Activated naive CD4-positive, alpha-beta T cell treated with anti-CD3 and anti-CD28 coated beads, Interleukin-2, amount 10 ng/mL, durations not matched to agents 7 days and 5 days (primary cell): ENCODE measurements at regions of chr6 and their contacts with region 1.

Region 1: GRCh38 chr6:41039060-41039998 is at the start of gene UNC5CL:
- DNase-seq: peak; percentile 81
- H3K4me3 Mint-ChIP-seq: no peak within 1 kb of the TSS
- H3K27ac Mint-ChIP-seq: no peak within 1 kb of the TSS
- H3K4me1 Mint-ChIP-seq: peaks cover 13% of the 10 kb centered on the region
- H3K27me3 Mint-ChIP-seq: peaks cover 4% of the 10 kb centered on the region

Region 2: DNA sequence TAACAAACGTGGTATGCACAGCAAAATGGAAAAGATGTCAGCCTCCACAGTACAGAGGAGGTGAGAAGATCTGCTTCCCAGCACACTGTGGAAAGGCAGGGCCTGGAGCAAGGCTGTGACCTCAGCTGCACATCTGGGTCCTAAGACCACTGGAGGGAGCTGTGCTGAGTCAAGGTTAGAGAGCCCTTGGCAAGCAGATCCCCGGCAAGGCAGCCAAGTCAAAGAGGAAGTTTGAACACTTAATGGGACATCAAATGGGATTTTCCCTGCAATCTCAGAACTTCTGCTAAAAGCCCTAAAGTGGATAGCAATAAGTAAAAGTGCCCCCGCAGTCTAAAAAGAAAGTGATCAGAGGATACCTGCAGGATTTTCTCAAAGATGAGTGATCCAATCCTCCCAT is 39.8 kb before region 1 on chr6:
- CTCF ChIA-PET with region 1: interaction called, 10 read pairs
- DNase-seq: peak; percentile 39
- H3K4me3 Mint-ChIP-seq: no peak overlapping the region
- H3K27ac Mint-ChIP-seq: no peak overlapping the region
- H3K4me1 Mint-ChIP-seq: no peaks in the 10 kb centered on the region
- H3K27me3 Mint-ChIP-seq: peaks cover 70% of the 10 kb centered on the region

Region 3: GRCh38 chr6:41051873-41052272 is 12.5 kb after region 1 on chr6:
- CTCF ChIA-PET with region 1: interaction called, 38 read pairs
- DNase-seq: no peak
- H3K4me3 Mint-ChIP-seq: no peak overlapping the region
- H3K27ac Mint-ChIP-seq: peak overlapping the region; percentile 79
- H3K4me1 Mint-ChIP-seq: peaks cover 21% of the 10 kb centered on the region
- H3K27me3 Mint-ChIP-seq: no peaks in the 10 kb centered on the region

Region 4: GRCh38 chr6:41066867-41067304 is 27.6 kb after region 1 on chr6:
- CTCF ChIA-PET with region 1: interaction called, 19 read pairs
- DNase-seq: peak; percentile 76
- H3K4me3 Mint-ChIP-seq: no peak overlapping the region
- H3K27ac Mint-ChIP-seq: no peak overlapping the region
- H3K4me1 Mint-ChIP-seq: peaks cover 64% of the 10 kb centered on the region
- H3K27me3 Mint-ChIP-seq: no peaks in the 10 kb centered on the region